Vagina (tissue), 2 donors: ENCODE measurements at regions of chr3 and their contacts with region 1.

Region 1: GRCh38 chr3:127822698-127823425 is 547 bp upstream of the MGLL start:
- DNase-seq: peak in 1 of 2 donors; percentile 95
- H3K4me3 ChIP-seq: peak overlapping the region; percentile 81 to 89
- H3K27ac ChIP-seq: peak overlapping the region; percentile 85
- H3K4me1 ChIP-seq: peaks cover 45% of the 10 kb centered on the region
- H3K27me3 ChIP-seq: no peaks in the 10 kb centered on the region
- CTCF ChIP-seq: peak in 1 of 3 experiments; percentile 33
- POLR2A ChIP-seq: no peak

Region 2: DNA sequence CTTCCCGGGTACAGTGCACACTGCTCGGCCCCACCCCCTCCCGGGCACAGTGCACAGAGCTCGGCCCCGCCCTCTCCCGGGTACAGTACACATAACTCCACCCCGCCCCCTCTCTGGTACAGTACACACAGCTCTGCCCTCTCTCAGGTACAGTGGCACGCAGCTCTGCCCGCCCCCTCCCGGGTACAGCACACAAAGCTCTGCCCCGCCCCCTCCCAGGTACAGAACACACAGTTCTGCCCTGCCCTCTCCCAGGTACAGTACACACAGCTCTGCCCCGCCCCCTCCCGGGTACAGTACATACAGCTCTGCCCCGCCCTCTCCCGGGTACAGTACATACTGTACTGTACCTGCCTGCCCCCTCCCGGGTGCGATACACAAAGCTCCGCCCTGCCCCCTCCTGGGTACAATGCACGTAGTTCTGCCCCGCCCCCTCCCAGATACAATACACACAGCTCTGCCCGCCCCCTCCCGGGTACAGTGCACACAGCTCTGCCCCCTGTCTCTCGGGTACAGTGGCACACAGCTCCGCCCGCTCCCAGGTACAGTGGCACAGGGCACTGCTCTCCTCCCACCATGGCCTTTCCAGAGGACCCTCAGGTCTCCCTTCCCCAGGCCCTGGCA is 518.6 kb before region 1 on chr3:
- intact Hi-C with region 1: no loop called
- DNase-seq: no peak
- H3K4me3 ChIP-seq: no peak overlapping the region
- H3K27ac ChIP-seq: peak overlapping the region; percentile 30
- H3K4me1 ChIP-seq: no peaks in the 10 kb centered on the region
- H3K27me3 ChIP-seq: no peaks in the 10 kb centered on the region
- CTCF ChIP-seq: no peak
- POLR2A ChIP-seq: no peak

Region 3: DNA sequence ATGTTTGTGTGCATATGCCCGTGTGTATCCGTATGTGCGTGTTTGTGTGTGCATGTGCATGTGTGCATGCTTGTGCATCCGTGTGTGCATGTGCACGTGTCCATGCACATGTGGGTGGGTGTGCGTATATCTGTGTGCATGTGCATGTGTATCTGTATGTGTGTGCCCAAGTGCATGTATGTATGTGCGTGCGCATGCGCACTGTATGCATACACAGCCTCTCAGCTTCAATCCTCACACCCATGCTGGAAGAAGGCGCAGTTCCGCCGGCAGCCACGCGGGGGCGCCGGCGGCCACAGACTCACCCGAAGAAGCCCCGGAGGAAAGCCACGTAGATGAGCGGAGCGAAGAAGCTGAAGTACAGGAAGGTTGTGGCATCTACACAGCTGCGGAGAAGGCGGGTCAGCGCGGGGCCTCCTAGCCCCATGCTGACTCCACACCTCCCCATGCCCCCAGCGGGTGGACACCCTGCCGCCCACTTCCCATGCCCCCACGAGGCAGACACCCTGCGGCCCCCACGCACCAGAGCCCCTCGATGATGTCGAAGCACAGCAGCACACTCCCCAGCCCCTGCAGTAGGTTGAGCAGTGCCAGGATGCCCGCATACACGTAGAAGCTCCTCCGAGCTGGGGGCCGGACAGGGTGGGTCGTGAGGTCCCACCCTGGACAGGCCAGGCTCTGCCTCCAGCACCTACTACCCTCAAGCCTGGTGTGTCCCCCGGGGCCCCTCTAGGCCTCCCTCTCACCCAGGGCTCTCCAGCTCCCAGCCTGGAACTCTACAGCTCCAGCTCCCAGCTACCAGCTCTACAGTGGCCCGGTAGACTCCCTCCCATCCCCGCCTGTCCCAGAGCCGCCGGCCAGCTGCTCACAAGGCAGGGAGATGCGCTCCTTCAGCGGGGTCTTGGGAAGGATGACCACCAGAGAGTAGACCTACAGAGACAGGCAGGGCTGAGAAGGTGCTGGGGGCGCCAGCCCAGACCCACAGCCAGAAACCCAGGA is 247.7 kb before region 1 on chr3:
- intact Hi-C with region 1: loop called (anchors 10 kb)
- DNase-seq: no peak
- H3K4me3 ChIP-seq: peak overlapping the region in 1 of 2 donors; percentile 10
- H3K27ac ChIP-seq: no peak overlapping the region
- H3K4me1 ChIP-seq: peaks cover 16% of the 10 kb centered on the region
- H3K27me3 ChIP-seq: no peaks in the 10 kb centered on the region
- CTCF ChIP-seq: peak; percentile 89 to 96 (median 92)
- POLR2A ChIP-seq: no peak

Region 4: GRCh38 chr3:127652231-127652995 is 170.4 kb before region 1 on chr3:
- intact Hi-C with region 1: loop called (anchors 5 kb)
- DNase-seq: no peak
- H3K4me3 ChIP-seq: no peak overlapping the region
- H3K27ac ChIP-seq: no peak overlapping the region
- H3K4me1 ChIP-seq: no peaks in the 10 kb centered on the region
- H3K27me3 ChIP-seq: no peaks in the 10 kb centered on the region
- CTCF ChIP-seq: peak; percentile 65 to 82 (median 76)
- POLR2A ChIP-seq: no peak

Region 5: GRCh38 chr3:127697551-127698240 is 125.2 kb before region 1 on chr3:
- intact Hi-C with region 1: loop called (anchors 5 kb)
- DNase-seq: no peak
- H3K4me3 ChIP-seq: peak overlapping the region in 1 of 2 donors; percentile 23
- H3K27ac ChIP-seq: peak overlapping the region; percentile 89
- H3K4me1 ChIP-seq: peaks cover 49% of the 10 kb centered on the region
- H3K27me3 ChIP-seq: no peaks in the 10 kb centered on the region
- CTCF ChIP-seq: no peak
- POLR2A ChIP-seq: no peak

Region 6: GRCh38 chr3:127747723-127748521 is 74.9 kb before region 1 on chr3:
- intact Hi-C with region 1: loop called (anchors 10 kb)
- DNase-seq: no peak
- H3K4me3 ChIP-seq: no peak overlapping the region
- H3K27ac ChIP-seq: peak overlapping the region; percentile 76
- H3K4me1 ChIP-seq: peaks cover 48% of the 10 kb centered on the region
- H3K27me3 ChIP-seq: no peaks in the 10 kb centered on the region
- CTCF ChIP-seq: no peak
- POLR2A ChIP-seq: no peak

Region 7: DNA sequence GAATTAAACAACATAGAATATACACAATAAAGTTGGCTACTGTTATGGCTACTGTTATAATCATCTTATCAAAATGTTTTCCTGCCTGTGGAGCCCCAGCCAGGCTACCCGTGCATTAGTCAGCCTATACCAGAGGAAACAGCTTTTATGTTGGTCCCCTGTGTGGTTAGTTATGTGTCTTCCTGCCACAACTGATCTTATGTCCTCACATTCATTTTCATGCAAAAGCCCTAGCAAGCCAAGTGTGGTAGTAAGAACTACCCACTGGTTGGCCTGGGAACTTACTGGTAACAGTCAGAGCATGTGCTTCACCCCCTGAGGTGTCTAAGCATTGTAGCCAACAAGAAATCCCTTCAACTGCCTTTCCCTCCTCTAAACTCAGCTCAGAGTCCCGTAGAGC is 22.4 kb before region 1 on chr3:
- intact Hi-C with region 1: no loop called
- DNase-seq: no peak
- H3K4me3 ChIP-seq: no peak overlapping the region
- H3K27ac ChIP-seq: no peak overlapping the region
- H3K4me1 ChIP-seq: no peaks in the 10 kb centered on the region
- H3K27me3 ChIP-seq: no peaks in the 10 kb centered on the region
- CTCF ChIP-seq: no peak
- POLR2A ChIP-seq: no peak

Region 8: GRCh38 chr3:127865941-127866340 is 43.1 kb after region 1 on chr3:
- intact Hi-C with region 1: no loop called
- DNase-seq: no peak
- H3K4me3 ChIP-seq: no peak overlapping the region
- H3K27ac ChIP-seq: no peak overlapping the region
- H3K4me1 ChIP-seq: no peaks in the 10 kb centered on the region
- H3K27me3 ChIP-seq: no peaks in the 10 kb centered on the region
- CTCF ChIP-seq: no peak
- POLR2A ChIP-seq: no peak

Region 9: GRCh38 chr3:127889461-127889863 is 66.6 kb after region 1 on chr3:
- intact Hi-C with region 1: no loop called
- DNase-seq: no peak
- H3K4me3 ChIP-seq: no peak overlapping the region
- H3K27ac ChIP-seq: peak overlapping the region; percentile 61
- H3K4me1 ChIP-seq: peaks cover 21% of the 10 kb centered on the region
- H3K27me3 ChIP-seq: no peaks in the 10 kb centered on the region
- CTCF ChIP-seq: no peak
- POLR2A ChIP-seq: no peak